ENCODE measurements at regions of chr4 and their contacts with region 1.

Region 1: GRCh38 chr4:141307241-141307689 is 86.6 kb downstream of the ZNF330 start:
- DNase-seq: peak; percentile 79
- CTCF ChIP-seq: peak; percentile 79

Region 2: GRCh38 chr4:141335166-141335565 is 27.9 kb after region 1 on chr4:
- CTCF ChIA-PET with region 1: interaction called, 11 read pairs
- POLR2A ChIA-PET with region 1: no interaction called
- DNase-seq: no peak
- CTCF ChIP-seq: no peak

Measured in GM10248 (cell line).